HAP-1 (cell line): ENCODE measurements at regions of chr12 and their contacts with region 1.

Region 1: DNA sequence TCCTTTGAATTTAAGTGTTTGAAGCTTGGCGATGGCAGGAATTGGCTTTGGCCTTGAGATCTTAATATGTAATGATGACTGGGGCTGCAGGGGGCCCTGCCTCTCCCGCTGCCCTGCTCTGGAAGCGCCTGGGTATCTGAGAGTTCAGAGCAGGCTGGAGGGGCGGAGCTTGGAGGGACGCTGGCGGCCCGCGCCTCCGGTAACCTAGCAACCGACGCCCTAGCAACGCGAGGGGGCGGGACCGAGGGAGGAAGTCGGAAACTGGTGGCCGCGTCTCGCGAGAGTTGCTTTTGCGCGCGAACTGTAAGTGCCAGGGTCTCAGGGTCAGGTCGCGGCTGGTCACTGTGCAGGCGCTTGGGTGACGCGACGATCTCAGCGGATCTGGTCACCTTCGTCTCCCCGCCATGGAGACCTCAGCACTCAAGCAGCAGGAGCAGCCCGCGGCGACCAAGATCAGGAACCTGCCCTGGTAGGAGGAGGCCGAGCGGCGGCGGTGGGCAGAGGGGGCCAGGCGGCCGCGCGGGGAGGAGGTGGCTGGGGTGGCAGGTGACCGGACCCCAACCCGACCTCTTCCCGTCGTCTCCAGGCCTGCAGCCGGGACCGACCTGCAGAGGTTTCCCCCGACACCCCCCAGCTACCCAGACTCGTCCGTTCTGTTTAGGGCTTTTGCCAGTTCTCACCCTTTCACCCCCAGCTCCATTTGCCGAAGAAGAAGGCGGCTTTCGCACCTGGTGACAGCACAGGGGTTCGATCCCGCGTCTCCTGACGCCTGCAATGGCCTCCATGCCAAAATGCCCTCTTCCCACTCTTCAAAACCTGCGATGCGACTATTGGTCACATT is at the start of gene RFC5:
- DNase-seq: peak; percentile 96 to 99
- H3K4me3 ChIP-seq: peak within 1 kb of the TSS; percentile 81
- H3K4me1 ChIP-seq: peaks cover 13% of the 10 kb centered on the region
- H3K27me3 ChIP-seq: no peaks in the 10 kb centered on the region

Region 2: GRCh38 chr12:117874842-117875434 is 141.7 kb before region 1 on chr12:
- in situ Hi-C with region 1: loop called (anchors 10 kb)
- DNase-seq: peak; percentile 48 to 85
- H3K4me3 ChIP-seq: no peak overlapping the region
- H3K4me1 ChIP-seq: no peaks in the 10 kb centered on the region
- H3K27me3 ChIP-seq: peaks cover 4% of the 10 kb centered on the region

Region 3: DNA sequence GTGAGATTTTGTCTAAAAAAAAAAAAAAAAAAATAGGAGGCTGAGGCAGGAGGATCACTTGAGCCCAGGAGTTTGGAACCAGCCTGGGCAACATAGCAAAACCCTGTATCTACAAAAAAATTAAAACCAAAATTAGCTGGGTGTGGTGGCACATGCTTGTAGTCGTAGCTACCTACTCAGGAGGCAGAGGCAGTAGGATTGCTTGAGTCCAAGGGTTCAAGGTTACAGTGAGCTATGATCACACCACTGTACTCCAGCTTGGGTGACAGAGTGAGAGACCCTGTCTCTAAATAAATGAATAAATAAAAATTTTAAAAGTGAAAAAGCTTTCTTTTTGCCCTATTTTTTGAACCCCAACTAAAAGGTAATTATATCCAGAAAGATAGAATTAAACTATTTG is 232.9 kb after region 1 on chr12:
- in situ Hi-C with region 1: no loop called
- DNase-seq: no peak
- H3K4me3 ChIP-seq: no peak overlapping the region
- H3K4me1 ChIP-seq: no peaks in the 10 kb centered on the region
- H3K27me3 ChIP-seq: no peaks in the 10 kb centered on the region